CD14-positive monocyte (primary cell): ENCODE measurements at regions of chr1 and their contacts with region 1.

Region 1: GRCh38 chr1:158149577-158150269 is 31.0 kb upstream of the CD1D start:
- DNase-seq: peak; percentile 95 to 98 (median 96)
- H3K4me3 ChIP-seq: peak overlapping the region; percentile 38 to 73 (median 39)
- H3K4me3 Mint-ChIP-seq: peak overlapping the region; percentile 75 to 76
- H3K27ac ChIP-seq: peak overlapping the region; percentile 76 to 81
- H3K27ac Mint-ChIP-seq: peak overlapping the region; percentile 92 to 99 (median 98)
- H3K4me1 ChIP-seq: peaks cover 79 to 81% of the 10 kb centered on the region in 2 donors
- H3K4me1 Mint-ChIP-seq: peaks cover 78% of the 10 kb centered on the region
- H3K27me3 ChIP-seq: no peaks in the 10 kb centered on the region
- H3K27me3 Mint-ChIP-seq: peaks cover 0 to 2% (median 0%) of the 10 kb centered on the region in 3 donors
- CTCF ChIP-seq: no peak

Region 2: GRCh38 chr1:158163000-158163947 is 13.6 kb after region 1 on chr1:
- intact Hi-C with region 1: loop called in 1 of 2 experiments (anchors 2 kb)
- DNase-seq: peak; percentile 56 to 64 (median 59)
- H3K4me3 ChIP-seq: peak overlapping the region in 1 of 3 experiments; percentile 64
- H3K4me3 Mint-ChIP-seq: peak overlapping the region; percentile 49 to 83
- H3K27ac ChIP-seq: peak overlapping the region; percentile 0 to 71
- H3K27ac Mint-ChIP-seq: peak overlapping the region; percentile 85 to 98 (median 95)
- H3K4me1 ChIP-seq: peaks cover 37 to 50% of the 10 kb centered on the region in 2 donors
- H3K4me1 Mint-ChIP-seq: peaks cover 45% of the 10 kb centered on the region
- H3K27me3 ChIP-seq: no peaks in the 10 kb centered on the region
- H3K27me3 Mint-ChIP-seq: peaks cover 0 to 2% (median 2%) of the 10 kb centered on the region in 3 donors
- CTCF ChIP-seq: no peak

Region 3: GRCh38 chr1:158185770-158186705 is 36.3 kb after region 1 on chr1:
- intact Hi-C with region 1: loop called in 1 of 2 experiments (anchors 2 kb)
- DNase-seq: peak; percentile 79 to 90 (median 88)
- H3K4me3 ChIP-seq: peak overlapping the region in 1 of 3 experiments; percentile 96
- H3K4me3 Mint-ChIP-seq: peak overlapping the region; percentile 34 to 42
- H3K27ac ChIP-seq: peak overlapping the region; percentile 49 to 91
- H3K27ac Mint-ChIP-seq: peak overlapping the region; percentile 41 to 91 (median 85)
- H3K4me1 ChIP-seq: peaks cover 56 to 62% of the 10 kb centered on the region in 2 donors
- H3K4me1 Mint-ChIP-seq: peaks cover 69% of the 10 kb centered on the region
- H3K27me3 ChIP-seq: no peaks in the 10 kb centered on the region
- H3K27me3 Mint-ChIP-seq: no peaks in the 10 kb centered on the region
- CTCF ChIP-seq: no peak

Region 4: DNA sequence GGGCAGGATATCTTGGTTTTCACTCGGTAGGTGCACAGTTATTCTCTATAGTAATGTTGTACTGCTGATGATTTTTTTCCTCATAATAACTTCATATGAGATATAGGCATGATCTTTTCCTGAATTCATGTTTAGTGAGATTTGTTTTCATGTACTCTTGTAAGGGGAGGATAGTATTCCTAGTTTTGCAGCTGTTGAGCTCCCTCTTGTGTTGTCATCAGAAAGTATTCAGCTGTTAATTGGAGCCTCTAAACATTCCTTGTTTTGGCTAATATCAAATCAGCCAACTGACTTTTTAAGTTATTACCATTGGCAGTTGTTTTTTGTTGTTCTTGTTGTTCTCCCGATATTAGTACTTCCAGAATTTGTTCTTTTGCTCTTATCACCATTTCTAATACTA is 346.7 kb after region 1 on chr1:
- intact Hi-C with region 1: no loop called
- DNase-seq: peak; percentile 16 to 45 (median 30)
- H3K4me3 ChIP-seq: no peak overlapping the region
- H3K4me3 Mint-ChIP-seq: no peak overlapping the region
- H3K27ac ChIP-seq: no peak overlapping the region
- H3K27ac Mint-ChIP-seq: no peak overlapping the region
- H3K4me1 ChIP-seq: no peaks in the 10 kb centered on the region
- H3K4me1 Mint-ChIP-seq: peaks cover 3% of the 10 kb centered on the region
- H3K27me3 ChIP-seq: peaks cover 3 to 4% of the 10 kb centered on the region in 2 donors
- H3K27me3 Mint-ChIP-seq: peaks cover 2 to 7% (median 2%) of the 10 kb centered on the region in 3 donors
- CTCF ChIP-seq: peak; percentile 52